PC-9 (cell line): ENCODE measurements at regions of chr5 and their contacts with region 1.

Region 1: GRCh38 chr5:180802325-180803180 is at the start of gene MGAT1:
- DNase-seq: peak; percentile 60 to 77
- H3K4me3 ChIP-seq: peak within 1 kb of the TSS; percentile 95
- H3K27ac ChIP-seq: peak within 1 kb of the TSS; percentile 63
- H3K4me1 ChIP-seq: peaks cover 41% of the 10 kb centered on the region
- H3K27me3 ChIP-seq: no peaks in the 10 kb centered on the region
- CTCF ChIP-seq: no peak
- total RNA-seq, gene MGAT1: 96.6 and 103 TPM in 2 replicates

Region 2: DNA sequence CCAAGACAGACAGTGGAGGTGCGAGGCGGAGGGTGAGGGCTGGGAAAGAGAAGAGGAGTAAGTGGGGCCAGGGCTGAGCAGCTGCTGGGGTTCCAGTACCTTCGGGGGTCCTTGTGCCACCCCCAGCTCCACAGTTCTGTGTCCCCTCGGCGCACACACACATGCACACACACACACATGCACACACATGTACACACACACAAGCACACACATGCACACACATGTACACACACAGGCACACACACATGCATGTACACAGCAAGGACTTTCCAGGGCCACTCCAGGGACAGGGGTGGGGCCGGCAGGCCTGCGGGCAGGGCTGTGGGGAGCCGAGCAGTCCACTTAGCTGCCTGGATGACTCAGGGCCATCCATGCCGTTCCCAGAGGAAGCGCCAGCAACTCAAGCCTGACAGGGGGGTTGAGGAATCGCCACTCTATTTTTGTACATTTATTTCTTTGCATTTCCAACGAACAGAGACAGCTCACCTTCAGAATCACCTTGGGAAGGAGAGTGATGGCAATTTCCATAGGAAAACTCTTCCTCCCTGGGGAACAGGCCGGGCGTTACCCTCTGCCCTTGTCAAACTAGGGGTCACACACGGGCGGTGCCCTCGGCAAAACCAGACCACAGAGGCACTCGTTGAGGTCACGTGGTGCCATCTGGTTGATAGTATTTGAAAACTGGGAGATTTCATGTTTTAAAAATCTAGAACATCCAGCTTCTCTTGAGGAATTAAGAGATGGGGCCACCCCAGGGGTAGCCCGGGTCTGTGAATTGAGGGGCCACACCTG is 1593.0 kb before region 1 on chr5:
- CTCF ChIA-PET with region 1: no interaction called
- POLR2A ChIA-PET with region 1: no interaction called
- intact Hi-C with region 1: no loop called
- DNase-seq: no peak
- H3K4me3 ChIP-seq: no peak overlapping the region
- H3K27ac ChIP-seq: no peak overlapping the region
- H3K4me1 ChIP-seq: no peaks in the 10 kb centered on the region
- H3K27me3 ChIP-seq: peaks cover 94% of the 10 kb centered on the region
- CTCF ChIP-seq: no peak

Region 3: GRCh38 chr5:180222056-180222455 is 580.5 kb before region 1 on chr5:
- CTCF ChIA-PET with region 1: interaction called, 13 read pairs
- POLR2A ChIA-PET with region 1: no interaction called
- intact Hi-C with region 1: no loop called
- DNase-seq: no peak
- H3K4me3 ChIP-seq: no peak overlapping the region
- H3K27ac ChIP-seq: no peak overlapping the region
- H3K4me1 ChIP-seq: no peaks in the 10 kb centered on the region
- H3K27me3 ChIP-seq: peaks cover 8% of the 10 kb centered on the region; the same call in 1 of the 2 replicates
- CTCF ChIP-seq: no peak

Region 4: DNA sequence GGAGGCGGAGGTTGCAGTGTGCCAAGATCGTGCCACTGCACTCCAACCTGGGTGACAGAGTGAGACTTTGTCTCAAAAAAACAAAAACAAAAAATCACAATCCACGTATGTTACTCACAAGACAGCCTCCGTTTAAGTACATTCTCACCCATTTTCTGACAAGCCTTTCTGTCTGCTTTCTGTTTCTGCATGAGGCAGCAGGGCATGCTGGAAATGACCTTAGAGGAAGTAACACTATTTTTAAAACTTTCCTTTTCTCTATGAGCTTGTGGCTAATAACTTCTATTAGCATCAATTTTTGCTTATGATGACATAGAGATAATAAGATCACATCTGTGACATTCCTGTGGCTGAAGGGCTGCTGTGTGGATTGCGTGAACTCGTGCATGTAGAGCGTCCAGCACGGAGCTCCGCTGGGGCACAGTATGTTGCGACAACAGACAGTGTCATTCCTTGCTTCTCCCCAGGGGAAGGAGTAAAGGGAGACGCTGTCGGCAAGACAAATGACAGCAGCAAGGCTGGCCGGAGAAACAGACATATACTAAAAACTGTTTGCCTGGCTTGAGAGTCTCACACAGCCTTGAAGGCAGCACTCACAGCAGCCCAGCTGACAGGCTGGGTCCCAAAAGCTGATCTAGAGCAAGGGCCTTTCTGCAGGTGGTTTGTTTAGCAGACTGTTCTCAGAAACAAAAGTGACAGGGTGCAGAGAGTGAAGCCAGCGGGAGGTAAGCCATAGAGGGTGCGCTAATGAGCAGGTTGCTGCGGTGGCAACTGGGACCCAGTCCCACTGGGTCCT is 187.7 kb after region 1 on chr5:
- CTCF ChIA-PET with region 1: no interaction called
- POLR2A ChIA-PET with region 1: no interaction called
- intact Hi-C with region 1: no loop called
- DNase-seq: no peak
- H3K4me3 ChIP-seq: no peak overlapping the region
- H3K27ac ChIP-seq: no peak overlapping the region
- H3K4me1 ChIP-seq: no peaks in the 10 kb centered on the region
- H3K27me3 ChIP-seq: no peaks in the 10 kb centered on the region
- CTCF ChIP-seq: no peak